Left colon (tissue), 2 donors: ENCODE measurements at regions of chr5 and their contacts with region 1.

Region 1: GRCh38 chr5:41869739-41870626 is at the start of gene OXCT1:
- DNase-seq: peak; percentile 87 to 90
- ATAC-seq: peak; percentile 93
- total RNA-seq, gene OXCT1: 12.8 to 15.8 TPM

Region 2: GRCh38 chr5:41924872-41925554 is 55.0 kb after region 1 on chr5 and contains the start of gene FBXO4:
- intact Hi-C with region 1: loop called in 1 of 2 experiments (anchors 5 kb)
- DNase-seq: peak; percentile 82 to 91
- ATAC-seq: peak; percentile 99
- total RNA-seq, gene FBXO4: 7.8 to 8.2 TPM